ENCODE measurements at regions of chr6 and their contacts with region 1.

Region 1: GRCh38 chr6:132669690-132670291 is 10.8 kb upstream of the TAAR1 start:
- DNase-seq: no peak
- H3K4me3 Mint-ChIP-seq: no peak overlapping the region
- H3K27ac Mint-ChIP-seq: no peak overlapping the region
- H3K4me1 Mint-ChIP-seq: peaks cover 4% of the 10 kb centered on the region
- H3K27me3 Mint-ChIP-seq: peaks cover 5% of the 10 kb centered on the region

Region 2: GRCh38 chr6:132530293-132530974 is 139.4 kb before region 1 on chr6:
- CTCF ChIA-PET with region 1: interaction called, 3 read pairs
- POLR2A ChIA-PET with region 1: no interaction called
- intact Hi-C with region 1: loop called (anchors 5 kb)
- DNase-seq: peak; percentile 69
- H3K4me3 Mint-ChIP-seq: no peak overlapping the region
- H3K27ac Mint-ChIP-seq: no peak overlapping the region
- H3K4me1 Mint-ChIP-seq: no peaks in the 10 kb centered on the region
- H3K27me3 Mint-ChIP-seq: peaks cover 7% of the 10 kb centered on the region

Region 3: GRCh38 chr6:132725947-132726607 is 56.3 kb after region 1 on chr6:
- CTCF ChIA-PET with region 1: interaction called, 5 read pairs
- POLR2A ChIA-PET with region 1: no interaction called
- intact Hi-C with region 1: loop called (anchors 5 kb)
- DNase-seq: no peak
- H3K4me3 Mint-ChIP-seq: no peak overlapping the region
- H3K27ac Mint-ChIP-seq: no peak overlapping the region
- H3K4me1 Mint-ChIP-seq: peaks cover 10% of the 10 kb centered on the region
- H3K27me3 Mint-ChIP-seq: no peaks in the 10 kb centered on the region

Region 4: DNA sequence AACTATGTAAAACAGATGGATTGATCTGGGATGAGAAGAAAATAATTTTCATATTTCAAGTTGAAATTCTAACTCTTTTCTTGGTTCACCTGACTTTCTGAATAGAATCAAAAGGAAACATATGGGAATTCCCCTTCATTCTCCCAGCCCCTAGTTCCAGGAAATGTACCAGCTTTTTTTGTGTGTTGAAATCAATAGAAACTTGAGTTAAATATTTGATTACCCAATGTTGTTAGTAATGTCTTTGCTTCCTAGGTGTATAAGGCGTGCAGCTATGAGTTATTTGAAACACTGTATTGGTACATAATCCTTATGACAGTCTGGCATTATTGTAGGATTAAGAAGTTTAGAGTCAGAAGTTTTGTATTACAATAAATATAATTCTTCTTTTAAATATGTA is 66.4 kb after region 1 on chr6:
- CTCF ChIA-PET with region 1: no interaction called
- POLR2A ChIA-PET with region 1: no interaction called
- intact Hi-C with region 1: no loop called
- DNase-seq: no peak
- H3K4me3 Mint-ChIP-seq: no peak overlapping the region
- H3K27ac Mint-ChIP-seq: no peak overlapping the region
- H3K4me1 Mint-ChIP-seq: peaks cover 17% of the 10 kb centered on the region
- H3K27me3 Mint-ChIP-seq: peaks cover 3% of the 10 kb centered on the region

Measured in activated CD4-positive, alpha-beta memory T cell treated with anti-CD3 and anti-CD28 coated beads for 36 hours (primary cell).